ENCODE measurements at regions of chr2 and their contacts with region 1.

Region 1: DNA sequence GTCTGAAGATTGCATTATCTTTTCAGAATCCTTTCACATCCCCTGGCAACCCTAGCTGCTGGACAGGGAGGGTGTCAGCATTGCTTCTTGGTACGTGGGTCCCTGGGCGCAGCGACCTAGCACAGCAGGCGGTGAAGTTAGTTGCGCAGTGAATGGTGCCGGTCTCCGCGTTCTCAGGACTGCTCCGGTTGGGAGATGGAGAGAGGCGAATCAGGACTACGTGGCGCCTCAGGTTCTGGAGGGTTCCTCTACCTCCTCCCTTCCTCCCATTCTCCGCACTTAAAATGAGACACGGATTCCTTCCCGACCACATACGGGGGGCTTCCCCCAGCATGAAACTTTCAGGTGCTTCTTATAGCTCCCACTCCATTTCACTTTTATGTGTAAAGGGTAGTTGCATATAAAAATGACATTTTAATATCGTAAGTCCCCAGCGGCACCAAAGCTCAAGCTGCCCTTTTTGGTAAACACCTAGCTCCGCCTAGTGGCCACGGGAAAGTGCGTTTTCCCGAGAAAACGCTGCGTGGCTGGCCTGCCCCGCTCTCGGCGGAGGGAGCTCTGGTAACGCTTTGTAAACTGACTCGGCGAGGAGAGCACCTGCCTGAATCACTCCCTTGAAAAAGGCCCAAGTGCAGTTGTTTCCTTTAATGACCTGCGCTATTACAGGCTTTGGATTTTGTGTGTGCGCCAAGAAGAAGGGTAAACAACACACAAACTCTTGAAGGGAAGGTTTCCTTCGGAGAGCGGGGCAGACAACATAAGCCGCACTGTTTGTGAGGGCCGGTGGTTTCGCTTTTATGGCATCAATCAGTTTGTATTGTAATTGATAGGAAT is 32.9 kb upstream of the INHBB start:
- DNase-seq: peak; percentile 41
- ATAC-seq: peak; percentile 88
- H3K4me3 ChIP-seq: peak overlapping the region; percentile 31 to 53
- H3K27ac ChIP-seq: no peak overlapping the region; the same call in 1 of the 2 replicates
- H3K4me1 ChIP-seq: no peaks in the 10 kb centered on the region; the same call in 1 of the 2 replicates
- H3K27me3 ChIP-seq: no peaks in the 10 kb centered on the region
- CTCF ChIP-seq: peak; percentile 97

Region 2: GRCh38 chr2:120109186-120110061 is 203.7 kb before region 1 on chr2:
- CTCF ChIA-PET with region 1: interaction called, 5 read pairs
- POLR2A ChIA-PET with region 1: no interaction called
- in situ Hi-C with region 1: no loop called
- intact Hi-C with region 1: loop called (anchors 10 kb)
- DNase-seq: no peak
- ATAC-seq: 0 out of 2 replicates have a peak, but pooled peaks have one; percentile 53
- H3K4me3 ChIP-seq: no peak overlapping the region
- H3K27ac ChIP-seq: no peak overlapping the region; the same call in 1 of the 2 replicates
- H3K4me1 ChIP-seq: peaks cover 8% of the 10 kb centered on the region
- H3K27me3 ChIP-seq: no peaks in the 10 kb centered on the region
- CTCF ChIP-seq: peak; percentile 55; the same call in 1 of the 2 replicates

Region 3: DNA sequence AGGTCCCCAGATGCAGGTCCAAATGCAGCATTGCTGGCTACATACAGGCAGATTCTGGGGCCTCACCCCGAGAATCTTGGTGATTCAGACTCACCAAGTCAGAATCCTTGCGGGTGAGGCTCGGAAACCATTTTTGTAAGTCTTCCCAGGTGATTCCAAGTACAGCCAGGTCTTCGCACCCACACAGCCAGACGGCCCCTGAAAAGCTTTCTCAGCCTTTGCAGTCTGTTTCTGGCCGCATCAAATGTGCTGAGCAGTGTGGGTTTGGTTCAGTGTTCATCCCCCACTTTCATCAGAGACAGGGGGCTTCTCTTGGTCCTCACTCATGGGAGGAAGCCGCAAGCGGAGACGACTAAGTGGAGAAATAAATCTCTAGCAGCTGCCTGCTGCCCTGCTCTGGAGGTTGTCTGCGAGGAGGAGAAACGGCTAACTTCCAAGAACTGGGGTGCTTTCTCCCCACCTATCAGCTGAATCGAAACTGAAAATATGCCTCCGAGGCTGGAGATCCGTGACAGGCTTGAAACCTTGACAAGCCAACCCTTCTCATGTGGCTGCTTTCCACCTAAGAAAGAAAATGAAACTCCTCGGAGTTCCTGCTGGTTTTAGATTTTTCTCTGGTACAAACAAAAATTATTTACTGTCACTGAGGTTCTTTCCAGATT is 81.0 kb before region 1 on chr2:
- CTCF ChIA-PET with region 1: interaction called, 4 read pairs
- POLR2A ChIA-PET with region 1: no interaction called
- in situ Hi-C with region 1: no loop called
- intact Hi-C with region 1: loop called (anchors 5 kb)
- DNase-seq: no peak
- ATAC-seq: peak; percentile 36; the same call in 1 of the 2 replicates
- H3K4me3 ChIP-seq: peak overlapping the region; percentile 35 to 45
- H3K27ac ChIP-seq: peak overlapping the region; percentile 80
- H3K4me1 ChIP-seq: peaks cover 7% of the 10 kb centered on the region
- H3K27me3 ChIP-seq: no peaks in the 10 kb centered on the region
- CTCF ChIP-seq: no peak

Region 4: DNA sequence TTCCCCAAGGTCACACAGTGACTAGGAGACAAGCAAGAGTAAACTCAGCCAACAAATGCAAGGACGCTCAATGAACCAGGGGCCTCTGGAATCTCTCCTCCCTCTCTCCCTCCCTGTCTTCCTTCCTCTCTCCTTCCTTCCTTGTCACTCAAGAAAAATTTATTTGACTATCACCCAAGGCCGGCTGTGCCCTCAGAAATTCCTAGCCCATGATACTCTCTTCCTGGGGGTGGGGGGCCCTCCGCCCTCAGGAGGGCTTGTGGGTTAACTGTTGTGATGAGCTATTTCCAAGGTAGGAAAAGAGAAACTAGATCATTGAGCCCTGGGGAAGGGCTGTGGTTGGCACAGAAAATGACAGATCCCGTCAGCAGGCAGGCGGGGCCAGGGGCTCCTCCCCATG is 54.6 kb after region 1 on chr2:
- CTCF ChIA-PET with region 1: no interaction called
- POLR2A ChIA-PET with region 1: no interaction called
- in situ Hi-C with region 1: no loop called
- intact Hi-C with region 1: no loop called
- DNase-seq: no peak
- ATAC-seq: no peak; the same call in 1 of the 2 replicates
- H3K4me3 ChIP-seq: no peak overlapping the region
- H3K27ac ChIP-seq: no peak overlapping the region
- H3K4me1 ChIP-seq: peaks cover 4% of the 10 kb centered on the region; the same call in 1 of the 2 replicates
- H3K27me3 ChIP-seq: no peaks in the 10 kb centered on the region
- CTCF ChIP-seq: no peak

Region 5: DNA sequence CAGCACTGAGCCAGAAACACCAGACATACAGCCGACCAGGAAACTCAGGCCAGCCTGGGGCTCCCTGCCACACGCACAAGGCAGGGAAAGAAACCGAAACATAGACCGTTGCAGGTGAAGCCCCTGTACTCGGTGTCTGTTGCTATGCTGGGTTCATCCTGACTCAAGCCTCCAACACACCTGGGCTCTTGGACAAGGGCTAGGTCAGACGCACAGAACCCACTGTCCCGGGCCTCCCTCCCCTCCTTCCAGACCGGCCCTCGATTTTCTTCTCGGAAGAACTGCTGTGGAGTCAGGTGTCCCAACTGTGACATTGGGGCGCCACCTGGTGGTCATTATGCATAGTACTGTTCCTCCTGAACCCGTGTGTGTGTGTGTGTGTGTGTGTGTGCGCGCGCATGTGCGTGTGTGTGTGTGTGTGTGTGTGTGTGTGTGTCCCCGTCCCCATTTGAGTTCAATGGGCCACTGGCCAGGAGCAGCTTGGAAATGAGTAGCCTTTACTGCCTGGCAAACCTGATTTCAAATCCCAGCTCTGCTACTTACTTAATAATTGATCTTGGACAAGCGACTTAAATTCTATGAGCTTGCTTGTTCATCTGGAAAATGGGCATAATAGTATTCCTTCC is 367.2 kb after region 1 on chr2:
- CTCF ChIA-PET with region 1: no interaction called
- POLR2A ChIA-PET with region 1: no interaction called
- in situ Hi-C with region 1: no loop called
- intact Hi-C with region 1: loop called (anchors 10 kb)
- DNase-seq: no peak
- ATAC-seq: peak; percentile 88
- H3K4me3 ChIP-seq: peak overlapping the region in 1 of 2 experiments; percentile 15; a peak in 1 of 4 replicates
- H3K27ac ChIP-seq: no peak overlapping the region
- H3K4me1 ChIP-seq: 0 out of 2 replicates have a peak, but pooled peaks cover 2% of the 10 kb centered on the region
- H3K27me3 ChIP-seq: peaks cover 5% of the 10 kb centered on the region
- CTCF ChIP-seq: peak; percentile 82